ENCODE measurements at regions of chr17 and their contacts with region 1.

Region 1: DNA sequence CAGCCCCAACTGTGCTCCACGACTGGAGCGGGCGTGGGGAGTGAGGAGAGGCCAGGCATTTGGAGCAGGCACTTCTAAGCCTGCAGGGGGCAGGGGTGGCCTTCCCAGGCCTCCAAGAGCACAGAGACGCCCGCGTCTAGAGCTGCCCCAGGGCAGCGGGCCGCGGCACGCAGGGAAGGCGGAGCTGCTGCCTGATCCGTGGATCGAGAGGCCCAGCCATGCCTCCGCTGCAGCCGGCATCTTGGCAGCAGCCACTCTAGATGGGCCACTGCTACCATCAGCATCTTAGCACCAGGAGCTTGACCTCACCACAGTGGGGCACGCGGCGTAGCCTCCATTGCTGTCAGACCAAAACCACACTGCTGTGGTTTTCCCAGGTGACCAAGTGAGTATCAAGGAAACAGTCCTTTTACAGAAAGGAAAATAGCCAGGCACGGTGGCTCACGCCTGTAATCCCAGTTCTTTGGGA is 20.4 kb upstream of the WDR45B start:
- DNase-seq: peak; percentile 83 to 84
- ATAC-seq: peak; percentile 97 to 99
- H3K4me3 ChIP-seq: peak overlapping the region; percentile 7; the same call in 1 of the 3 replicates
- H3K27ac ChIP-seq: peak overlapping the region; percentile 48 to 79; a peak in 5 of 6 replicates
- H3K4me1 ChIP-seq: peaks cover 6% of the 10 kb centered on the region; the same call in 2 of the 3 replicates
- CTCF ChIP-seq: peak; percentile 89
- EP300 ChIP-seq: no peak
- POLR2A ChIP-seq: no peak
- RAD21 ChIP-seq: peak; percentile 92 to 97

Region 2: DNA sequence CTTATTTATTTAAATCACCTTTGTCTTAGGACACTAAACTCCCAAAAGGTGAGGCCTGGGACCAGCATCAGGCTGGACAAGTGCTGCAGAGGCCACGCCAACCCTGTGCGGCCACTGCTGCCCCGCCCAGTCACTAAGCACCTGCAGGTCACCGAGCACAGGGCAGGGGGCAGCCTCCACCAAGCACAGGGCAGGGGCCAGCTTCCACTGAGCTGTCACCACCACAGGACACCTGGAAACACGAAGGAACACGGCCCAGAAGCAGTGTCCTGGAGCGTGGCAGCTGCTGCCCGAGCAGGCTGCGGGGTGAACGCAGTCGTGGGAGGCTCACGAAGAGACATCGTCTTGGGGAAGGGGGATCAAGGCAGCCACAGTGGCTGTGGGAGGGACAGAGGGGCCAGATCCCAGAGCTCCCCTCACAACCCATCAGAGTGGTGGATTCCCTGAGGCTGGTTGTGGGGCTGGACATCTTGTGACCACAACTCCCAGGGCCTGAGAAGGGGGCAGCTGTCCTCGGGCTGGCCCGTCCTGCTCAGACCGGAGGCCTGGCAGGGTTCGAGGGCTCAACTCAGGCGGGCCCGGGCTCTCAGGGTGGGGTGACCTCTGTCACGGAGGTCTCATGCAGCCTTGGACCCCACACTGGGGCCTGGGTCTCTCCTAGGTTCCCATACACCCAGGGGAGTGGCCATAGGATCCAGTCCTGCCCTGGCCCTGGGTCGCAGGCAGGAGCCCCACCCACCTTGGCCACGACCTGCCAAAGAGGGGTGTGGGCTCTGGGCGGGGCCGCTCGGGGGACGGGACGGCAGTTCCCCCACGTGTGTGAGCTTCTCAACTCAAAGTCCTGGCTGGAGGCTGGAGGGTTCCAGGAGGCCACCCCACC is 11.2 kb after region 1 on chr17:
- CTCF ChIA-PET with region 1: interaction called, 62 read pairs
- POLR2A ChIA-PET with region 1: no interaction called
- DNase-seq: no peak
- ATAC-seq: peak; percentile 41 to 62; a peak in 4 of 6 replicates
- H3K4me3 ChIP-seq: no peak overlapping the region
- H3K27ac ChIP-seq: no peak overlapping the region
- H3K4me1 ChIP-seq: peaks cover 16% of the 10 kb centered on the region
- CTCF ChIP-seq: no peak
- EP300 ChIP-seq: no peak
- POLR2A ChIP-seq: no peak
- RAD21 ChIP-seq: peak; percentile 21 to 28; a peak in 1 of 5 replicates

Region 3: DNA sequence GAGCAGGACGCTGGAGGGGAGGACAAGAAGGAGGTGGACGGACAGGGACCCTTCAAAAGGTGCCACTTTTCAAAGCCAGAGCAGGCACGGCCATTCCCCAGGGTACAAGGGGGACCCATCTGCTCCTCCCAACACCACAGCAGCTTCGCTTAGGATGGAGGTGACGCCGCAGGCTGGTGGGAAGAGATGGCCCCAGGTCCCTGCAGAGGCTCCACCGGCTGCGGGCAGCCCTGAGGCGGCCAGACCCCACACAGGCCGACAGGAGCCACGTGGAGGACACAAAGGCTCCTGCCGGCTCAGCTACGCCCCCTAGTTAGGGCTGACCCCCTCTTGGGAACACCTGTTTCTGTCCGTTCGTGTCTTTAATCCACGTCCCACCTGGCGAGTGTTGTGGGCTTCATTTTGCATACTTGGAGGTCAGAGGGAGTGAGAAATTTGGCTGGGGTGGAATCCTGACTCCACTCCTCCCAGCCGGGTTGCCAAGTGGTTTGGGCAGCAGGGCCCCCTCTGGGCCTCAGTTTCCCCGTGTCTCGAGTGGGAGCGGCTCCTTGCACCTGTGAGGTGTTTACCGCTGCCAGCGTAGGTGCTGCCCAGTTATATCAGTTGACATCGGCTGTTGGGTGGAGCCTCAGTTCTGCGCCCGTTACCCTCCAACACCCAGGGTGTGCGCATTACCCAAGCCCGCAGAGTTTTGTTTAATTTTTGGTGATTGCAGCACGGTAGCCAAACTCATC is 42.0 kb after region 1 on chr17:
- CTCF ChIA-PET with region 1: interaction called, 15 read pairs
- POLR2A ChIA-PET with region 1: interaction called, 4 read pairs
- DNase-seq: no peak
- ATAC-seq: no peak
- H3K4me3 ChIP-seq: no peak overlapping the region
- H3K27ac ChIP-seq: no peak overlapping the region
- H3K4me1 ChIP-seq: peaks cover 7% of the 10 kb centered on the region
- CTCF ChIP-seq: peak; percentile 13; the same call in 1 of the 3 replicates
- EP300 ChIP-seq: no peak
- POLR2A ChIP-seq: no peak
- RAD21 ChIP-seq: no peak

Region 4: GRCh38 chr17:82729479-82730260 is 61.0 kb after region 1 on chr17:
- CTCF ChIA-PET with region 1: interaction called, 23 read pairs
- POLR2A ChIA-PET with region 1: no interaction called
- DNase-seq: no peak
- ATAC-seq: peak; percentile 27 to 32; a peak in 3 of 6 replicates
- H3K4me3 ChIP-seq: no peak overlapping the region
- H3K27ac ChIP-seq: no peak overlapping the region
- H3K4me1 ChIP-seq: no peaks in the 10 kb centered on the region
- CTCF ChIP-seq: no peak
- EP300 ChIP-seq: no peak
- POLR2A ChIP-seq: no peak
- RAD21 ChIP-seq: no peak

Region 5: GRCh38 chr17:82754297-82755208 is 85.9 kb after region 1 on chr17:
- CTCF ChIA-PET with region 1: interaction called, 15 read pairs
- POLR2A ChIA-PET with region 1: no interaction called
- DNase-seq: peak in 1 of 2 experiments; percentile 63
- ATAC-seq: peak in 1 of 2 experiments; percentile 40; a peak in 3 of 6 replicates
- H3K4me3 ChIP-seq: no peak overlapping the region
- H3K27ac ChIP-seq: no peak overlapping the region
- H3K4me1 ChIP-seq: peaks cover 13% of the 10 kb centered on the region
- CTCF ChIP-seq: no peak
- EP300 ChIP-seq: no peak
- POLR2A ChIP-seq: no peak
- RAD21 ChIP-seq: no peak

Measured in A549 (cell line).